WTC11 (cell line): ENCODE measurements at regions of chrX and their contacts with region 1.

Region 1: DNA sequence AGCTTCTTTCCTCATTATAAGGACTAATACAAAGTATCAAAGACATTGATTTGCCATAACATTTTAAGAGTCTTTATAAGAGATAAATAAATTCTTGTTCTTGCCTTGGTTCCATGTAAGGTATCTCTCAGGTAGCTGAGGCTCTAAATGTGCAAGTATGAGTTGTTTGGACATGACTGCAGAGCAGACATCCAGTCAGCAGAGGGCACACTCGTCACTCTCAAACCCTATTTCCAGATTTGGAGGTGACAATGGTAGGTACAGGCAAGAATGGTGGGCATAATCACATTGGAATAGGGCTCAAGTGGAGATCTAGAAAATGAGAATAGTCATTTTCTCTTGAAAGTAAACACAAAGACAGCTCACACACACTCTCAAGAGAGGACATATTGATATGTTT is 133.3 kb upstream of the ZIC3 start:
- DNase-seq: peak; percentile 52
- ATAC-seq: peak; percentile 21
- H3K4me3 Mint-ChIP-seq: no peak overlapping the region
- H3K27ac Mint-ChIP-seq: no peak overlapping the region
- H3K4me1 Mint-ChIP-seq: peaks cover 27% of the 10 kb centered on the region
- H3K27me3 Mint-ChIP-seq: peaks cover 14% of the 10 kb centered on the region
- CTCF ChIP-seq: peak; percentile 44

Region 2: GRCh38 chrX:137926090-137926489 is 493.5 kb after region 1 on chrX:
- CTCF ChIA-PET with region 1: interaction called, 21 read pairs
- POLR2A ChIA-PET with region 1: no interaction called
- DNase-seq: peak; percentile 19
- ATAC-seq: peak; percentile 68
- H3K4me3 Mint-ChIP-seq: no peak overlapping the region
- H3K27ac Mint-ChIP-seq: no peak overlapping the region
- H3K4me1 Mint-ChIP-seq: peaks cover 31% of the 10 kb centered on the region
- H3K27me3 Mint-ChIP-seq: no peaks in the 10 kb centered on the region
- CTCF ChIP-seq: 0 out of 2 replicates have a peak, but pooled peaks have one; percentile 27